ENCODE measurements at regions of chr19 and their contacts with region 1.

Region 1: GRCh38 chr19:52269338-52270261 is at the start of gene ZNF766:
- DNase-seq: peak; percentile 98 to 99
- ATAC-seq: peak; percentile 100
- H3K4me3 ChIP-seq: peak within 1 kb of the TSS; percentile 100
- H3K27ac ChIP-seq: peak within 1 kb of the TSS; percentile 97
- H3K4me1 ChIP-seq: peaks cover 17% of the 10 kb centered on the region
- H3K27me3 ChIP-seq: no peaks in the 10 kb centered on the region
- CTCF ChIP-seq: no peak
- total RNA-seq, gene ZNF766: 6.3 to 10.4 (median 8.8) TPM

Region 2: DNA sequence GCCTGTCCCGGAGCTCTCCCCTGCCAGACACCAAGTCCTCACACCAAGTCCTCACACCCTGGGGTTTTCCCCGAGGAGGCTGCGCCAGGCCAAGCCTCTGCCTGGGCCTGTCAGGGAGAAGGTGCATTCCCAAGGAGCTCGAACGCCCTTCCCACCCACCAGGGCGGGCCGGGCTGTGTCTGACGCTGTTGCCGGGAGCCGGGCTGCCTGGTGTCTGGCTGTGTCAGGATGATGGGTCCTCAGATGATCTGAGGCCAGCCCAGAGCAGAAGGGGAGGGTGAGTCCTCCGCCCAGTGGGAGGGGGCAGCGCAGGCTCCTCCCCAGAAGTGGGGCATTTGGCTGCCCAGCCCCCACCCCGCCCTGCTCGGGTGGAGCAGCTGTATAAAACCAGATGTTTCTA is 543.6 kb before region 1 on chr19:
- intact Hi-C with region 1: no loop called
- DNase-seq: peak; percentile 68 to 75
- ATAC-seq: peak in 1 of 4 donors; percentile 36
- H3K4me3 ChIP-seq: no peak overlapping the region
- H3K27ac ChIP-seq: no peak overlapping the region
- H3K4me1 ChIP-seq: no peaks in the 10 kb centered on the region
- H3K27me3 ChIP-seq: peaks cover 0 to 46% (median 22%) of the 10 kb centered on the region in 3 donors
- CTCF ChIP-seq: no peak

Region 3: GRCh38 chr19:52296773-52297600 is 27.4 kb after region 1 on chr19 and contains the start of gene ZNF480:
- intact Hi-C with region 1: loop called in 1 of 2 experiments (anchors 2 kb)
- DNase-seq: peak; percentile 89 to 94
- ATAC-seq: peak; percentile 82 to 92 (median 86)
- H3K4me3 ChIP-seq: peak within 1 kb of the TSS; percentile 68
- H3K27ac ChIP-seq: peak within 1 kb of the TSS; percentile 82
- H3K4me1 ChIP-seq: peaks cover 8% of the 10 kb centered on the region
- H3K27me3 ChIP-seq: no peaks in the 10 kb centered on the region
- CTCF ChIP-seq: no peak
- total RNA-seq, gene ZNF480: 6.2 to 10.5 (median 7.0) TPM